ENCODE measurements at regions of chr5 and their contacts with region 1.

Region 1: DNA sequence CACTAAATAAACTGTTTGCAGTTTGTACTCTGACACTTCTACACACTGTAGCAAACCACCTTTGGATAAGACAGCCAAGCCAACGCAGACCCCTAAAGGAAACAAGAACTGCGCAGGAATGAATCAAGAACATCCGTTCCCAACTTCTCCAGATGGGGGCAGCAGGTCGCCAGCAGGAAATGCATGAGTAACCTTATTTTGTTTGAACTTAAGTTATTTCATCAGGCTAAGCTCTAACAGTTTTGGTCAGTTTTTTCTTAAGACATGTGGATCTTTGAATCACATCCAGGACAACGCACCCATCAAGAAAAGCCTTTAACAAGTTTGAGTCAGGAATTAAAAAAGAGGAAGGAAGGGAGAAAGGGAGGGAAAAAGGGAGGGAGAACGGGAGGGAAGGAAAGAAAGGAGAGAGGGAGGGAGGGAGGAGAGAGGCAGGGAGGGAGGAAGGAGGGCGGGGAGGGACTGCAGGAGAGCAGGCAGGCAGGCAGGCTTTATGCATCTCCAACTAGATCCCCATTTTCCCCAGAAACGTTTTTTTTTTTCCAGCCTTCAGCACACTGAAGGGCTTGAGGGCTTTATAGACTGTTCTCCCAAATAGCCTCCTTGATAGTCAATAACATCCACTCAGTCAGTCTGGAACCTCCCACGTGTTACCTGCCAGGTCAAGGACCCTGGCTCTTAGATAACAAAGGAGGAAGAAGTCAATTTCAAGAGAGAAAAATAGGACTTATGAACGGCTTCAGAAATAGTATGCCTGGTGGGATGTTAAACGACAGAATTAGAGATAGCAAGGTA is 22.2 kb downstream of the BHMT start:
- DNase-seq: peak; percentile 27 to 76 (median 57)
- H3K4me3 ChIP-seq: peak overlapping the region in 57 of 59 donors; percentile 6 to 66 (median 41)
- H3K27ac ChIP-seq: peak overlapping the region in 54 of 59 donors; percentile 3 to 88 (median 68)
- H3K27me3 ChIP-seq: no peaks in the 10 kb centered on the region
- CTCF ChIP-seq: peak in 55 of 56 donors; percentile 37 to 79 (median 65)

Region 2: GRCh38 chr5:79020861-79021561 is 112.8 kb before region 1 on chr5:
- intact Hi-C with region 1: loop called (anchors 1 to 2 kb)
- DNase-seq: peak; percentile 28 to 75 (median 63)
- H3K4me3 ChIP-seq: peak overlapping the region in 45 of 59 donors; percentile 3 to 57 (median 29)
- H3K27ac ChIP-seq: no peak overlapping the region
- H3K27me3 ChIP-seq: no peaks in the 10 kb centered on the region
- CTCF ChIP-seq: peak; percentile 55 to 94 (median 84)

Region 3: DNA sequence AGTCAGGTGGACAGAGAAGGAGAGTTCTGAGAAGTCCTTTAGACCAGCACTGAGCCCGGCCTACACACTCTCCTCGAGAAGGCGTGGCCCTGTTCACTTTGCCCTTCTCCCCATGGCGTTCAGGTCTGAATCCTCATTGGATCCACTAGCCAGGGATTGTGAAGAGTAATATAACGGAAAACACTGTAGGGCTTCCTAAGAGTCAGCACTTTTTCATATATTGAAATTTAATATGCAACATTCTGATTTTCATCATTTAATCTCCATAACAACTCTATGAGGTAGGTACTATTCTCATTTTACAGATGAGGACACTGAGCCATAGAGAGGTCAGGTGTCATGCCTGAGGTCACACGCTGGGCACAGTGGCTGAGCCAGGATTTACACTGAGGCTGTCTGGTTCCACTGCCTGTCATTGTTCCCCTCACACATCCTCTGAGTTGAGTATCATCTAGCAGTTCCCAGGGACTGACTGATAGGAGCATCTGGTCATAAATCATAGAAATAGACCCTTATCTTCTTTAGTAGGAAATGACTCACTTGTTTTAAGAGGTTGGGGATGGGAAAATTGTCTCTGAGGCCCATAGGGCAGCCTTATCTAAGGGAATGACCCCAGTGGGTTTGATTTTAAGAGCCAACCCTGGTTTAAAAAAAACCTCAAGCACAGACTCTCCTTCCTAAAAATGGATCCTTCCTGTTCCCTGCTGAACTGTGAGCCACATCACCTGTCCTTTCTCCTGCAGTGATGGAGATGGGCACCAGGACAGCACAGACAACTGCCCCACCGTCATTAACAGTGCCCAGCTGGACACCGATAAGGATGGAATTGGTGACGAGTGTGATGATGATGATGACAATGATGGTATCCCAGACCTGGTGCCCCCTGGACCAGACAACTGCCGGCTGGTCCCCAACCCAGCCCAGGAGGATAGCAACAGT is 942.5 kb after region 1 on chr5:
- intact Hi-C with region 1: loop called (anchors 5 kb)
- DNase-seq: no peak
- H3K4me3 ChIP-seq: no peak overlapping the region
- H3K27ac ChIP-seq: no peak overlapping the region
- H3K27me3 ChIP-seq: no peaks in the 10 kb centered on the region
- CTCF ChIP-seq: no peak